H1 (cell line): ENCODE measurements at regions of chr14 and their contacts with region 1.

Region 1: DNA sequence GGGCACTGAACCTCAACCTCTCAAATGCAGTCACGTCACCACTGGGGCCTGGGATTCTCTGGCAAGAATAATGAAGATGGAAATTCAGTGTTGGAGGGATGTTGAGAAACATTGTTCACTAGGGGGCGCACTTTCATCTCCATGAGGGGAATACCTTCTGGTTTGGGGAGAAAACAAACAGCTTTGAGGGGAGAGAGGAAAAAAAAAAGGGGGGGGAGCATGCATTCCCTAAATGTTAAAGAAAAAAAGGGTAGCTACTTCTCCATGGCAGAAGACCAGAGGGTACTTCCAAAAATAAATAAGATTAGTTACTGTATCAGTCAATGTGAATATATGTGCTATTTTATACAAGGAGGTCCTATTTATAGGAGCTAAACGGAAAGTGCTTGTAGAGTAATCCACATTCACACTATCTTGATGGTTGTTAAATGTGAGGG is 5.8 kb upstream of the TBPL2 start:
- DNase-seq: peak in 1 of 2 experiments; percentile 75
- H3K4me3 ChIP-seq: no peak overlapping the region
- H3K27ac ChIP-seq: no peak overlapping the region
- H3K4me1 ChIP-seq: no peaks in the 10 kb centered on the region
- H3K27me3 ChIP-seq: no peaks in the 10 kb centered on the region
- CTCF ChIP-seq: peak in 2 of 3 experiments; percentile 64 to 72; a peak in 3 of 4 replicates
- EP300 ChIP-seq: no peak
- POLR2A ChIP-seq: no peak
- RAD21 ChIP-seq: peak; percentile 70 to 78

Region 2: DNA sequence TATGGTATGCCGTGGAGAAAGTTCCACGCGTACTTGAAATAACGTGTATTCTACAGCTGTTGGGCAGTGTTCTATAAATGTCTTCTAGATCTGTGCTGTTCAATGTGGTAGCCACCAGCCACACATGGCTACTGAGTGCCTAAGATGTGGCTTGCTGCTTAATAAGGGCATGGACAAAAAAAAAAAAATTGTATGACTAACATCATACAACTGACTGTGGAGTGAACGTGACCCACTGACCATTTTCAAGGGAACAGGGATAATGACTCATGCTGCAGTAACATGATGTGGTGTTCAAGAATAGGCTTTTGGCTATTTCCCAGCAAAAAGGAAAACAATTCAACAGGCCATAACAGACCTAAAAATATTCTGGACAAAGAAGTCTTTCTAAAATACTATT is 47.6 kb before region 1 on chr14:
- CTCF ChIA-PET with region 1: no interaction called
- POLR2A ChIA-PET with region 1: no interaction called
- DNase-seq: no peak
- H3K4me3 ChIP-seq: no peak overlapping the region
- H3K27ac ChIP-seq: no peak overlapping the region
- H3K4me1 ChIP-seq: no peaks in the 10 kb centered on the region
- H3K27me3 ChIP-seq: no peaks in the 10 kb centered on the region
- CTCF ChIP-seq: no peak
- EP300 ChIP-seq: no peak
- POLR2A ChIP-seq: no peak
- RAD21 ChIP-seq: no peak

Region 3: GRCh38 chr14:55416866-55417265 is 29.4 kb before region 1 on chr14:
- CTCF ChIA-PET with region 1: interaction called, 10 read pairs
- POLR2A ChIA-PET with region 1: no interaction called
- DNase-seq: peak in 1 of 2 experiments; percentile 58
- H3K4me3 ChIP-seq: no peak overlapping the region
- H3K27ac ChIP-seq: no peak overlapping the region
- H3K4me1 ChIP-seq: no peaks in the 10 kb centered on the region; a peak in 1 of 7 replicates
- H3K27me3 ChIP-seq: no peaks in the 10 kb centered on the region
- CTCF ChIP-seq: peak; percentile 49 to 72 (median 60)
- EP300 ChIP-seq: no peak
- POLR2A ChIP-seq: no peak
- RAD21 ChIP-seq: peak; percentile 64 to 75

Region 4: GRCh38 chr14:55458800-55459515 is 12.7 kb after region 1 on chr14:
- CTCF ChIA-PET with region 1: interaction called, 15 read pairs
- POLR2A ChIA-PET with region 1: no interaction called
- DNase-seq: no peak
- H3K4me3 ChIP-seq: no peak overlapping the region
- H3K27ac ChIP-seq: no peak overlapping the region
- H3K4me1 ChIP-seq: peaks cover 0 to 6% (median 2%) of the 10 kb centered on the region in 4 experiments; a peak in 3 of 7 replicates
- H3K27me3 ChIP-seq: no peaks in the 10 kb centered on the region
- CTCF ChIP-seq: no peak
- EP300 ChIP-seq: no peak
- POLR2A ChIP-seq: no peak
- RAD21 ChIP-seq: no peak

Region 5: DNA sequence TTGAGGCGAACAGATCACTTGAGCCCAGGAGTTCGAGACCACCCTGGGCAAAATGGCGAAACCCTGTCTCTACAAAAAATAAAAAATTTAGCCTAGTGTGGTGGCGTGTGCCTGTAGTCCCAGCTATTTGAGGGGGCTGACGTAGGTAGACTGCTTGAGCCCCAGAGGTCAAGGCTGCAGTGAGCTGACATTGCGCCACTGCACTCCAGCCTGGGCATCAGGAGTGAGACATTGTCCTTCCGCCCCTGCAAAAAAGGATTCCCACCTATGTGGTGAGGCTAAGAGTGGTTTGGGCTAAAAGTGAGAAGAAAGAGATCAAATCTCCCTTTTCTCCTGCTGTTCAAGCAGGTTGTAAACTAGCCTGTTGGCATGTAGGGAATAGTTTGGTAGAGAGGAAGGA is 128.8 kb after region 1 on chr14:
- CTCF ChIA-PET with region 1: interaction called, 11 read pairs
- POLR2A ChIA-PET with region 1: interaction called, 4 read pairs
- DNase-seq: no peak
- H3K4me3 ChIP-seq: no peak overlapping the region
- H3K27ac ChIP-seq: no peak overlapping the region
- H3K4me1 ChIP-seq: peaks cover 0 to 3% (median 2%) of the 10 kb centered on the region in 4 experiments; a peak in 3 of 7 replicates
- H3K27me3 ChIP-seq: no peaks in the 10 kb centered on the region
- CTCF ChIP-seq: no peak
- EP300 ChIP-seq: no peak
- POLR2A ChIP-seq: no peak
- RAD21 ChIP-seq: no peak

Region 6: DNA sequence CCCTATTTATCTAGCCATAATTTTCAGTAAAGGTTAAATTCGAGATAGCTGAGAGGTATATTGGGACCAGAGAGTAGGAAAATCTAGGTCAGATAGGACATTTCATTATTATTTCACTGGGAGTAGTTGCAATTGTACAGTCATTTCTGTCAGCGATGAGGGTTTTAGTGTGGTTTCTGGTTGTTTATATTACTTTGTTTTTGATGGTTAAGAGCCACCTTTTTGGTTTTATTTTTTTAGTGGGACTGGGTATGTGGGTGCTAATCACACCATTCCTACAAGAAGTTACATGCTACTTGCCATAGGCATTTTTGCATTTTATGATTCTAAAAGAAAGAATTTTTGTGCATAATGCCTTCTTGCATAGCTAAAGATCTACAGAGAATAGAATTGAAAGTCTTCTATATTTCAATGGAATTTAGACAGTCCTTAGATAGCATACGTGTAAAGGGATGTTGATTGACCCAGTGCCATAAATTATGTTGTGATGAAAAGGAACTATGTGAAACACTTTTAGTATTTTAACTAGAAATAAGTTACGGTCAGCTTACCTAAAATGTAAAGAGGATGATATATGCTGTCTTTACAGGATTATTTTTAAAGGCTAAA is 218.9 kb after region 1 on chr14:
- CTCF ChIA-PET with region 1: interaction called, 10 read pairs
- POLR2A ChIA-PET with region 1: no interaction called
- DNase-seq: no peak
- H3K4me3 ChIP-seq: no peak overlapping the region
- H3K27ac ChIP-seq: no peak overlapping the region
- H3K4me1 ChIP-seq: no peaks in the 10 kb centered on the region
- H3K27me3 ChIP-seq: no peaks in the 10 kb centered on the region
- CTCF ChIP-seq: no peak
- EP300 ChIP-seq: no peak
- POLR2A ChIP-seq: no peak
- RAD21 ChIP-seq: no peak